ENCODE measurements at regions of chr9 and their contacts with region 1.

Region 1: DNA sequence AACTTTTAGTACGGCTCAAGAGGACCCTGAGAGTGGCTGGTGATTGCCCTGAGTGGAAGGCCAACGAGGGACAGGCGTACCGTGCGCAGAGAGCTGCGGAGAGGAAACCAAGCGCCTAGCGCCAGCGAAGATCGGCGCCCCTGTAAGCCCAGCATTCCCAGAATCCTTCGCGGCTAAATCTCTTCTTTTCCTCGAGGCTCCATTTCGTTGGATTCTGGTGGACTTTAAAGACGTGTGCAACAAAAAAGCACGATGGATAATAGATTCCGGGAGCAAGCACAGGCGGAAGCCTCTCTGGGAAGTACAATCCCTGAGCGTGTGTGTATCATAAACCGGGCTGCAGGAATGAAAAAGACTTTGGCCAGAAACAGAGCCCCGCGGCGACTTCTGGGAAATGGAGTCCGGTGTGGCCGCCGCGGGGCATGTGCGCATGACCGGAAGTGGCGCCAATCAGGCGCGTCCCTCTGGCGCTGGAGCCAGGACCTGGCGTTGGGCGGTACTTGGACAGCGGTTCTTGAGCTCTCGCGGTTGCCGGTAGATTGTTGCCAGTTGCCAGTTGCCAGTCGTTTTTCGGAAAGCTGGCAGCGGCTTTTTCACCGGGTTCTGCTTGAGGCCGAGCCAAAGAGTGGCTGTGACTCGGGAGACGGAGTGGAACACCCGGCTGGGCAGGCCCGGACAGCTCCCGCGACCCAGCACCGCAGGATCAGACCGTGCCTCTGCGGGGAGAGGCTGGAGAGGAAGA is at the start of gene ZNF79:
- DNase-seq: peak; percentile 92
- H3K4me3 Mint-ChIP-seq: peak within 1 kb of the TSS; percentile 99
- H3K27ac Mint-ChIP-seq: peak within 1 kb of the TSS; percentile 97
- H3K4me1 Mint-ChIP-seq: peaks cover 59% of the 10 kb centered on the region
- H3K27me3 Mint-ChIP-seq: peaks cover 3% of the 10 kb centered on the region
- total RNA-seq, gene ZNF79: 21.7 and 23.1 TPM in 2 replicates

Region 2: DNA sequence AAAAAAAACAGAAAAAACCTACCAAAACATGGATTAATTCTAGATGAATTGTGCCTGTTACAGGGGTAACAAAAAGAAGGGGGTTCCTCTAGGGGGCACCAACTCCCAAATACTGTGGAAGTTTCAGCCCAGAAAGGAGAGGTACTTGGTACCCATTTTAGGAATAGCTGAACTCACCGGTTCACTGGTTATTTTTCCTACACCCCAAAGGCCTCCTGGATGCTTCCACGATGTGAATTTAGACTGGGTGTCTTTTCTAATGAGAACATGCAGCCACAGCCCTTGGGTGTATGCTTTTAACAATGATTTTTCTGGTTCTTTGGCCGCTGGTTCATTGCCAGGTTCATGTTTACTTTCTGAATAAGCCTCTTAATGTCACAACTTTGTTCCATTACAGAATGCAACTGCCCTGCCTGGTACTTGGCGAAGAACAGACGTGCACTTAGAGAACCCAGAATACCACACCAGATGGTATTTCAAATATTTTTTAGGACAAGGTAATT is 112.8 kb before region 1 on chr9:
- intact Hi-C with region 1: loop called (anchors 10 kb)
- DNase-seq: no peak
- H3K4me3 Mint-ChIP-seq: no peak overlapping the region
- H3K27ac Mint-ChIP-seq: no peak overlapping the region
- H3K4me1 Mint-ChIP-seq: no peaks in the 10 kb centered on the region
- H3K27me3 Mint-ChIP-seq: peaks cover 29% of the 10 kb centered on the region

Region 3: DNA sequence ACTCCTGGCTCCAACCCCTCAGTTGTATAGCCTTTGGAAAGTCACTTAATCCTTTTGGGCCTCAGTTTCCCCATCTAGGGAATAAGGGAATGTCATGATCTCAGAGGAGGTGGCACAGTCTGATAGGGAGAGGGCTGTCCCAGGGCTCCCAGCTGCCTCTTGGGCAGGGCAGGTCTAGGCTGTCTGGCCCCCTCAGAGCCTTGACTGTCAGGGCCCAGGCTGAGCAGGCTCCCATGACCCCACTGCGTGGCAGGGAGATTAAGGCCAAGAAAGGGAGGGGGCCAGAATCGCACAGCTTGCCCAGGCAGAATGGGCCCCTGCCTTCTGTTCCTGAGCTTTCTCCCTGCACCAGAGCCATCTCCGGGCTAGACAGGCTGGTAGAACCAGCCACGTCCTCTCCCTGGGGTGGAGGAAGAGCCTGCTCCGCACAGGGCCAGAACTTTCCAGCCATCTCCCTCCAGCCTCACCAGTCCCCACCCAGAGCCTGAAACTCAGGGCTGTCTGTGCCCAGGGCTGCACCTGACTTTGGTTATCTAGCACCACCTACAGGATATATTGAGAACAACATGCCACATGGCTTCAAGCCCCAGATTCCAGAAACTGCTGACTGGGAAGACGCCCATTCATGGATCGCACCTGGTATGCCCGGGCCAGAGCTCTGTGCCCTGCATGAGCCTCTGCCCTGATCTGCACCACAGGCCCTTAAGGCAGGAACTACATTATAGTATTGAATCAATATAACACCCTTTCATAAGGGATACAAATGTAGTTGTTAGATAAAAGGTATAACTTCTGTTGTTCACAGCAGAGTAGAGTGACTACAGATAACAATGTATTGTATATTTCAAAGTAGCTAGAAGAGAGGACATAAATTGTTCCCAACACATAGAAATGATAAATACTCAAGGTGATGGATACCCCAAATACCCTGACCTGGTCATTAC is 611.0 kb after region 1 on chr9:
- intact Hi-C with region 1: loop called (anchors 5 kb)
- DNase-seq: peak; percentile 62
- H3K4me3 Mint-ChIP-seq: no peak overlapping the region
- H3K27ac Mint-ChIP-seq: no peak overlapping the region
- H3K4me1 Mint-ChIP-seq: peaks cover 36% of the 10 kb centered on the region
- H3K27me3 Mint-ChIP-seq: peaks cover 9% of the 10 kb centered on the region

Measured in activated T-helper 1 cell treated with anti-CD3 and anti-CD28 coated beads, Interleukin-12 subunit alpha, Interleukin-12 subunit beta, Interleukin-2, Interleukin-4 antibody, amounts not matched to agents 30 ng/mL and 10 ng/mL and 1 ng/mL, durations not matched to agents 14 hours and 24 hours and 36 hours (primary cell).